ENCODE measurements at regions of chr9 and their contacts with region 1.

Region 1: GRCh38 chr9:123544007-123544827 is 188.2 kb downstream of the CRB2 start:
- DNase-seq: peak; percentile 56
- H3K4me3 ChIP-seq: no peak overlapping the region
- H3K27ac ChIP-seq: no peak overlapping the region
- H3K4me1 ChIP-seq: peaks cover 2% of the 10 kb centered on the region
- H3K27me3 ChIP-seq: no peaks in the 10 kb centered on the region
- CTCF ChIP-seq: peak; percentile 58 to 63
- POLR2A ChIP-seq: no peak

Region 2: GRCh38 chr9:123401879-123402513 is 142.2 kb before region 1 on chr9:
- CTCF ChIA-PET with region 1: no interaction called
- POLR2A ChIA-PET with region 1: no interaction called
- dilution Hi-C with region 1: no loop called
- intact Hi-C with region 1: loop called (anchors 2 kb)
- DNase-seq: peak; percentile 64
- H3K4me3 ChIP-seq: no peak overlapping the region
- H3K27ac ChIP-seq: no peak overlapping the region
- H3K4me1 ChIP-seq: no peaks in the 10 kb centered on the region
- H3K27me3 ChIP-seq: no peaks in the 10 kb centered on the region
- CTCF ChIP-seq: peak; percentile 75 to 78
- POLR2A ChIP-seq: no peak

Region 3: GRCh38 chr9:123816817-123817472 is 272.7 kb after region 1 on chr9:
- CTCF ChIA-PET with region 1: no interaction called
- POLR2A ChIA-PET with region 1: no interaction called
- dilution Hi-C with region 1: no loop called
- intact Hi-C with region 1: loop called (anchors 10 kb)
- DNase-seq: peak; percentile 89
- H3K4me3 ChIP-seq: no peak overlapping the region
- H3K27ac ChIP-seq: peak overlapping the region; percentile 29
- H3K4me1 ChIP-seq: peaks cover 36% of the 10 kb centered on the region
- H3K27me3 ChIP-seq: no peaks in the 10 kb centered on the region
- CTCF ChIP-seq: no peak
- POLR2A ChIP-seq: no peak

Region 4: GRCh38 chr9:123929870-123930831 is 385.9 kb after region 1 on chr9 and contains the start of gene DENND1A:
- CTCF ChIA-PET with region 1: no interaction called
- POLR2A ChIA-PET with region 1: no interaction called
- dilution Hi-C with region 1: no loop called
- intact Hi-C with region 1: loop called (anchors 10 kb)
- DNase-seq: peak; percentile 92
- H3K4me3 ChIP-seq: peak within 1 kb of the TSS; percentile 50 to 87 (median 87)
- H3K27ac ChIP-seq: no peak within 1 kb of the TSS
- H3K4me1 ChIP-seq: peaks cover 13% of the 10 kb centered on the region
- H3K27me3 ChIP-seq: no peaks in the 10 kb centered on the region
- CTCF ChIP-seq: no peak
- POLR2A ChIP-seq: no peak
- total RNA-seq, gene DENND1A: 15.7 and 18.5 TPM in 2 replicates

Region 5: DNA sequence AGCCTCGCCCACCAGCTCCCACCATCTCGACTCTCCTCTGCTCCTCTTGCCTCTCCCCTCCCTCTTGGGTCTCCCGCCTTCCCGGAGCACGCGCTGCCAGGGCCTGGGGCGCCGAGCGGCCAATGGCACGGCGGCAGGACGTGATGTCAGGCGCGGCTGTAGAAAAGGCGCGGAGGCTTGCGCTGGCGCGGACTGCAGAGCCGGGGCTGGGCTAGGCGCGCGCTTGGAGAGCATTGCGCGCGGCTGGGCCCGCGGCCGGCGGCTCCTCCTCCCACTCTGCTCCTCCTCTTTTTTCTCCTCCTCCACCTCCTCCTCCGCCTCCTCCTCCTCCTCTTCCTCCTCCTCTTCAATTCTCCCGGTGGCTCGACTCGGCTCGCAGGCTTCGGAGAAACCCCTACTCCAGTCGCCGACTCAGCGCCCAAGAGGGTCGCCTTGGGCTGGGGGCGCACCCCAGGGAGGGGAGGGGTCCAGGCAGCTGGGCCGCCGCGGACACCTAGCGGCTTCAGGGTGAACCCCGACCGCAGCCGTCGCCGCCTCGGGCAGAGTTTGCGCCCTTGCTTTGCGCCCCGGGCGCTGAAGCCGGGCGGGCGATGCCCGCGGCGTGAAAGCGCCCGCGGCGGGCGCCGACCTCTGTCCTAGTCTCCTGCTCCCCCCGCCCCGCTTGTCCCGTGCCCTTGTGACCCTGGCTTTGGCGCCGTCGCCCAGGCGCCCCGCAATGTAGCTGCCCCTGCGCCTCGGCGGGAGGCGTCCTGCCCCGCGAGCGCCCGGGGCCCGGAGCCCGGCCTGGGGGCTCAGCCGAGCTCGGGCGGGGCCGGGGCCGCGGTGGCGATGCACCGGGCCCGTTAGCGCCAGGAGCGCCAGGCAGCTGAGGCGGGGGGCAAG is 467.4 kb after region 1 on chr9 and contains the start of gene LHX2:
- CTCF ChIA-PET with region 1: interaction called, 5 read pairs
- POLR2A ChIA-PET with region 1: no interaction called
- dilution Hi-C with region 1: no loop called
- intact Hi-C with region 1: loop called (anchors 2 kb)
- DNase-seq: peak; percentile 46
- H3K4me3 ChIP-seq: peak within 1 kb of the TSS in 1 of 3 experiments; percentile 8
- H3K27ac ChIP-seq: no peak within 1 kb of the TSS
- H3K4me1 ChIP-seq: peaks cover 3% of the 10 kb centered on the region
- H3K27me3 ChIP-seq: peaks cover 91 to 97% of the 10 kb centered on the region in 2 experiments
- CTCF ChIP-seq: peak in 1 of 2 donors; percentile 9
- POLR2A ChIP-seq: no peak
- total RNA-seq, gene LHX2: not detected in 2 replicates

Measured in endothelial cell of umbilical vein (primary cell).